A549 (cell line): ENCODE measurements at regions of chr17 and their contacts with region 1.

Region 1: DNA sequence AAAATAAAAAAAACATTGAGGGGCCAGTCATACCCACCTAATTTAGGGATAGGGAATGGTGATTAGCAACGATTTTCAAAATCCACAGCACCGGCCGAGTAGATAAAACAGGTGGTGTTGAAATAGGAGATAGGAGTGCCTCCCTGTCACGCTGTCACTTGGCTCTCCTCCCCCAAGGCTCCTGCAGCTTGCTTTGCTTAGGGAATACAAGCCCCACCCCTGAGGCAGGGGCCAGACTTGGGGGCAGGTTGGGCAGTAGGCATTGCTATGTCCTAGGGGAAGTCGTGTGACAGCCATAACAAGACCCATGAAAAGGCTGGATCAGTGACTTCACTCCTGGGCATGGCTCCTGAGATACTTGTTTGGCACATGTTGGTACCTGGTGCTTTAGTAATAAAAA is 25.8 kb downstream of the POLR2A start:
- DNase-seq: no peak
- ATAC-seq: no peak
- H3K4me3 ChIP-seq: no peak overlapping the region
- H3K27ac ChIP-seq: no peak overlapping the region
- H3K4me1 ChIP-seq: no peaks in the 10 kb centered on the region
- CTCF ChIP-seq: no peak
- EP300 ChIP-seq: no peak
- POLR2A ChIP-seq: no peak
- RAD21 ChIP-seq: no peak

Region 2: GRCh38 chr17:7496470-7497183 is 13.3 kb before region 1 on chr17:
- CTCF ChIA-PET with region 1: interaction called, 72 read pairs
- POLR2A ChIA-PET with region 1: no interaction called
- DNase-seq: no peak
- ATAC-seq: peak in 1 of 2 experiments; percentile 14; a peak in 2 of 6 replicates
- H3K4me3 ChIP-seq: no peak overlapping the region
- H3K27ac ChIP-seq: no peak overlapping the region
- H3K4me1 ChIP-seq: peaks cover 1% of the 10 kb centered on the region; the same call in 1 of the 3 replicates
- CTCF ChIP-seq: no peak
- EP300 ChIP-seq: no peak
- POLR2A ChIP-seq: no peak
- RAD21 ChIP-seq: no peak